ENCODE measurements at regions of chr11 and their contacts with region 1.

Region 1: GRCh38 chr11:118353084-118353710 is 6.2 kb upstream of the UBE4A start:
- DNase-seq: peak in 2 of 5 donors; percentile 53 to 68
- H3K4me3 ChIP-seq: no peak overlapping the region
- H3K4me3 Mint-ChIP-seq: no peak overlapping the region
- H3K27ac ChIP-seq: no peak overlapping the region
- H3K27ac Mint-ChIP-seq: peak overlapping the region; percentile 83 to 97 (median 92)
- H3K4me1 ChIP-seq: peaks cover 23% of the 10 kb centered on the region
- H3K4me1 Mint-ChIP-seq: peaks cover 21 to 45% (median 38%) of the 10 kb centered on the region in 3 donors
- H3K27me3 ChIP-seq: no peaks in the 10 kb centered on the region
- H3K27me3 Mint-ChIP-seq: no peaks in the 10 kb centered on the region

Region 2: GRCh38 chr11:118338637-118339061 is 14.5 kb before region 1 on chr11:
- CTCF ChIA-PET with region 1: interaction called, 39 read pairs
- POLR2A ChIA-PET with region 1: no interaction called
- DNase-seq: peak; percentile 80 to 98 (median 90)
- H3K4me3 ChIP-seq: peak overlapping the region; percentile 99
- H3K4me3 Mint-ChIP-seq: peak overlapping the region; percentile 90 to 99 (median 94)
- H3K27ac ChIP-seq: peak overlapping the region; percentile 87
- H3K27ac Mint-ChIP-seq: peak overlapping the region; percentile 94 to 100 (median 99)
- H3K4me1 ChIP-seq: peaks cover 72% of the 10 kb centered on the region
- H3K4me1 Mint-ChIP-seq: peaks cover 57 to 73% (median 69%) of the 10 kb centered on the region in 3 donors
- H3K27me3 ChIP-seq: no peaks in the 10 kb centered on the region
- H3K27me3 Mint-ChIP-seq: peaks cover 0 to 4% of the 10 kb centered on the region in 2 donors